SK-MEL-5 (cell line): ENCODE measurements at regions of chr2 and their contacts with region 1.

Region 1: GRCh38 chr2:188628989-188629688 is 337.5 kb downstream of the GULP1 start:
- DNase-seq: peak; percentile 76

Region 2: DNA sequence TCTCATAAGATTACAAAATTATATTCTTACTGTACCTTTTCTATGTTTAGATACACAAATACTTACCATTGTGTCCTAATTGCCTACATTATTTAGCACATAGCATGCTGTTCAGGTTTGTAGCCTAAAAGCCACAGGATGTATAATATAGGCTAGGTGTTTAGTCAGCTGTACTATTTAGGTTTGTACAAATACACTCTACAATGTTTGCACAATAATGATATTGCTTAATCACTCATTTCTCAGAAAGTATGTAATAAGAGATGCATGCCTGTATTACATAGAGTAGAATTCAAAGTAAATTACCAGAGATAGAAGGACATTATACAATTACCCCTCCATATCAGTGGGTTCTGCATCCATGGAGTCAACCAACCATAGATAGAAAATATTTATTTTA is 143.9 kb after region 1 on chr2:
- in situ Hi-C with region 1: no loop called
- DNase-seq: no peak

Region 3: GRCh38 chr2:188969236-188969635 is 340.1 kb after region 1 on chr2:
- in situ Hi-C with region 1: loop called (anchors 10 kb)
- DNase-seq: no peak